ENCODE measurements at regions of chr17 and their contacts with region 1.

Region 1: GRCh38 chr17:40038882-40039513 is 15.2 kb downstream of the MED24 start:
- DNase-seq: no peak
- ATAC-seq: no peak
- H3K4me3 Mint-ChIP-seq: no peak overlapping the region
- H3K27ac Mint-ChIP-seq: no peak overlapping the region
- H3K4me1 Mint-ChIP-seq: no peaks in the 10 kb centered on the region
- H3K27me3 Mint-ChIP-seq: no peaks in the 10 kb centered on the region

Region 2: DNA sequence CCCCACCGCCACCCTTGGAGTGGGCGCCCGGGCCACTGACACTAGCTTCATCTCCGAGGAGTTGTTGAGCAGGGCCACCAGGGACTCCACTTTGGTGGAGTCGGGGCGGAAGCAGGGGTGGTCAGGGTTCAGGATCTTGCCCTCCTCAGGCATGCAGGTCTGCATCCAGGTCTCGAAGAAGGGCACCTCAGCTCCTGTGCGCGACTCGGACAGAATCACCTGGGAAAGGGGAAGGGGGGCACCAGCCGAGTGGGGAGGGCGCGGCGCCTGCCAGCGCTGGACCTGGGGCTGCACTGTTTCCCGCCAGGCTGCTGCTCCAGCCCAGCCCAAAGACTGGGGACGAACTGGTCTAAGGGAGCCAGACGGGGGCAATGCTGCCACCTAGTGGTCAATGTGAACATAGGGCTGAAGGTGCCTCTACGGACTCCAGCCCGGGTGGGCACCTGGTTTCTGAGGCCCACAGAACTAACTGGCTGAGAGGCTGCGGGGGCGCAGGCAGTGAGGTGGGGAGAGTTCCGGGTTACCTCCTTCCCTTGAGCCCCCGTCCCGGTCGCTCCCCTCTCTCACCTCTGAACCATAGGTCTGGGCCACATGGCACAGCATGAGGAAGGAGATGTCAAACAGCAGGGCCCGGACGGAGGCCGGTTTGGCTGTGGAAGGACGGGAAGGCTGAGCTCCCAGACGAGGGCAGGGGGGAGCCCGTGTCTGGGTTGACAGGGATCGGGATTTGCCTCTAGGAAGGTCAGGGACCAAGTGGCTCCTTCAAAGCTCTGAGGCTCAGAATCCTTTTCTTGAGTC is 12.0 kb before region 1 on chr17:
- CTCF ChIA-PET with region 1: interaction called, 26 read pairs
- POLR2A ChIA-PET with region 1: no interaction called
- intact Hi-C with region 1: no loop called
- DNase-seq: peak; percentile 86
- ATAC-seq: peak; percentile 94
- H3K4me3 Mint-ChIP-seq: no peak overlapping the region
- H3K27ac Mint-ChIP-seq: no peak overlapping the region
- H3K4me1 Mint-ChIP-seq: peaks cover 22% of the 10 kb centered on the region
- H3K27me3 Mint-ChIP-seq: no peaks in the 10 kb centered on the region

Region 3: DNA sequence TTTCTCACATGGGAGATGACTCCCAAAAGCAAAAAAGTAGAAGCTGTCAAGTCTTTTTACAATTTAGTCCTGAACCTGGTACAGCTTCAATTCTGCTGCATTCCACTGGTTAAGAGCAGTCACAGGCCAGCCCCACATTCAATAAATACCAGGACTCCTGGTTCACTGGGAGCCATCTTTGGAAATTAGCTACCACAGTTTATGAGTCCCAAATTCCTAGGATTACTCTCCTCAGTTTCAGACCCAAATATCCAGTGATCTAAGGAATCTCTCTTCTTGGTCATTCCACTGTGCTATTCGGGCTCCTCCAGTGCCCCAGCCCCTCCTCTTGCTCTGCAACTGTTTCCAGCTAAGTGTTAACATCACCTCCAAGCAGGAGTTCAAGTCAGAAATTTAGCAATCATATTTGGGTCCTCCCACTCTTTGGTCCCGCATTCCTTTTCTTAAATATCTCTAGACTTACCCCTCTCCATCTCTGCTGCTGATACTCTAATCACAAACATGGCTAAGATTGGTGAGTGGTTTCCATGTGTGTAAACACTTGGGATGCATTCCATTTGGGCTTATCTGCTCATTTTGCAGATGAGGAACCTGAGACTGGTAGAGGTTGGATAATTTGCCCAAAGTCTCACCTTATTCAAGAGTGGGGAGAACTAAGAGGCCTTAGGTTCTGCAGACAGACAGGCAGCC is 170.6 kb after region 1 on chr17:
- CTCF ChIA-PET with region 1: no interaction called
- POLR2A ChIA-PET with region 1: no interaction called
- intact Hi-C with region 1: no loop called
- DNase-seq: no peak
- ATAC-seq: no peak
- H3K4me3 Mint-ChIP-seq: no peak overlapping the region
- H3K27ac Mint-ChIP-seq: no peak overlapping the region
- H3K4me1 Mint-ChIP-seq: no peaks in the 10 kb centered on the region
- H3K27me3 Mint-ChIP-seq: no peaks in the 10 kb centered on the region